ENCODE measurements at regions of chr9 and their contacts with region 1.

Region 1: DNA sequence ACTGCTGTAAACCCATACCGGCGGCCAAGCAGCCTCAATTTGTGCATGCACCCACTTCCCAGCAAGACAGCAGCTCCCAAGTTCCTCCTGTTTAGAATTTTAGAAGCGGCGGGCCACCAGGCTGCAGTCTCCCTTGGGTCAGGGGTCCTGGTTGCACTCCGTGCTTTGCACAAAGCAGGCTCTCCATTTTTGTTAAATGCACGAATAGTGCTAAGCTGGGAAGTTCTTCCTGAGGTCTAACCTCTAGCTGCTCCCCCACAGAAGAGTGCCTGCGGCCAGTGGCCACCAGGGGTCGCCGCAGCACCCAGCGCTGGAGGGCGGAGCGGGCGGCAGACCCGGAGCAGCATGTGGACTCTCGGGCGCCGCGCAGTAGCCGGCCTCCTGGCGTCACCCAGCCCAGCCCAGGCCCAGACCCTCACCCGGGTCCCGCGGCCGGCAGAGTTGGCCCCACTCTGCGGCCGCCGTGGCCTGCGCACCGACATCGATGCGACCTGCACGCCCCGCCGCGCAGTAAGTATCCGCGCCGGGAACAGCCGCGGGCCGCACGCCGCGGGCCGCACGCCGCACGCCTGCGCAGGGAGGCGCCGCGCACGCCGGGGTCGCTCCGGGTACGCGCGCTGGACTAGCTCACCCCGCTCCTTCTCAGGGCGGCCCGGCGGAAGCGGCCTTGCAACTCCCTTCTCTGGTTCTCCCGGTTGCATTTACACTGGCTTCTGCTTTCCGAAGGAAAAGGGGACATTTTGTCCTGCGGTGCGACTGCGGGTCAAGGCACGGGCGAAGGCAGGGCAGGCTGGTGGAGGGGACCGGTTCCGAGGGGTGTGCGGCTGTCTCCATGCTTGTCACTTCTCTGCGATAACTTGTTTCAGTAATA is at the start of gene FXN:
- DNase-seq: peak; percentile 86
- H3K4me3 Mint-ChIP-seq: peak within 1 kb of the TSS; percentile 95
- H3K27ac Mint-ChIP-seq: peak within 1 kb of the TSS; percentile 85
- H3K4me1 Mint-ChIP-seq: peaks cover 24% of the 10 kb centered on the region
- H3K27me3 Mint-ChIP-seq: no peaks in the 10 kb centered on the region
- total RNA-seq, gene FXN: 16.8 to 17.3 TPM

Region 2: GRCh38 chr9:68983522-68984424 is 51.9 kb before region 1 on chr9:
- CTCF ChIA-PET with region 1: no interaction called
- intact Hi-C with region 1: no loop called
- DNase-seq: no peak
- H3K4me3 Mint-ChIP-seq: no peak overlapping the region
- H3K27ac Mint-ChIP-seq: no peak overlapping the region
- H3K4me1 Mint-ChIP-seq: peaks cover 28% of the 10 kb centered on the region
- H3K27me3 Mint-ChIP-seq: no peaks in the 10 kb centered on the region

Region 3: GRCh38 chr9:68999393-69000105 is 36.1 kb before region 1 on chr9:
- CTCF ChIA-PET with region 1: no interaction called
- intact Hi-C with region 1: no loop called
- DNase-seq: peak; percentile 79
- H3K4me3 Mint-ChIP-seq: no peak overlapping the region
- H3K27ac Mint-ChIP-seq: no peak overlapping the region
- H3K4me1 Mint-ChIP-seq: peaks cover 18% of the 10 kb centered on the region
- H3K27me3 Mint-ChIP-seq: no peaks in the 10 kb centered on the region

Region 4: GRCh38 chr9:69019808-69020207 is 15.9 kb before region 1 on chr9:
- CTCF ChIA-PET with region 1: interaction called, 10 read pairs
- intact Hi-C with region 1: no loop called
- DNase-seq: peak; percentile 34
- H3K4me3 Mint-ChIP-seq: no peak overlapping the region
- H3K27ac Mint-ChIP-seq: no peak overlapping the region
- H3K4me1 Mint-ChIP-seq: peaks cover 23% of the 10 kb centered on the region
- H3K27me3 Mint-ChIP-seq: no peaks in the 10 kb centered on the region

Region 5: GRCh38 chr9:69168709-69169217 is 133.1 kb after region 1 on chr9:
- CTCF ChIA-PET with region 1: interaction called, 5 read pairs
- intact Hi-C with region 1: loop called (anchors 1 kb)
- DNase-seq: peak; percentile 88
- H3K4me3 Mint-ChIP-seq: peak overlapping the region; percentile 72
- H3K27ac Mint-ChIP-seq: peak overlapping the region; percentile 82
- H3K4me1 Mint-ChIP-seq: peaks cover 20% of the 10 kb centered on the region
- H3K27me3 Mint-ChIP-seq: peaks cover 26% of the 10 kb centered on the region

Region 6: GRCh38 chr9:69174616-69175463 is 139.2 kb after region 1 on chr9:
- CTCF ChIA-PET with region 1: interaction called, 5 read pairs
- intact Hi-C with region 1: loop called (anchors 1 kb)
- DNase-seq: peak; percentile 84
- H3K4me3 Mint-ChIP-seq: peak overlapping the region; percentile 77
- H3K27ac Mint-ChIP-seq: peak overlapping the region; percentile 37
- H3K4me1 Mint-ChIP-seq: peaks cover 39% of the 10 kb centered on the region
- H3K27me3 Mint-ChIP-seq: peaks cover 43% of the 10 kb centered on the region

Region 7: GRCh38 chr9:69324549-69325401 is 289.1 kb after region 1 on chr9 and contains the start of gene ENTREP1:
- CTCF ChIA-PET with region 1: no interaction called
- intact Hi-C with region 1: no loop called
- DNase-seq: no peak
- H3K4me3 Mint-ChIP-seq: peak within 1 kb of the TSS; percentile 41
- H3K27ac Mint-ChIP-seq: no peak within 1 kb of the TSS
- H3K4me1 Mint-ChIP-seq: peaks cover 10% of the 10 kb centered on the region
- H3K27me3 Mint-ChIP-seq: peaks cover 40% of the 10 kb centered on the region
- total RNA-seq, gene ENTREP1: not detected

Region 8: GRCh38 chr9:69549310-69550202 is 513.9 kb after region 1 on chr9:
- CTCF ChIA-PET with region 1: no interaction called
- intact Hi-C with region 1: loop called (anchors 5 kb)
- DNase-seq: peak; percentile 32
- H3K4me3 Mint-ChIP-seq: no peak overlapping the region
- H3K27ac Mint-ChIP-seq: no peak overlapping the region
- H3K4me1 Mint-ChIP-seq: no peaks in the 10 kb centered on the region
- H3K27me3 Mint-ChIP-seq: peaks cover 18% of the 10 kb centered on the region

Measured in activated naive CD4-positive, alpha-beta T cell treated with anti-CD3 and anti-CD28 coated beads for 36 hours (primary cell).